ENCODE measurements at regions of chr11 and their contacts with region 1.

Region 1: DNA sequence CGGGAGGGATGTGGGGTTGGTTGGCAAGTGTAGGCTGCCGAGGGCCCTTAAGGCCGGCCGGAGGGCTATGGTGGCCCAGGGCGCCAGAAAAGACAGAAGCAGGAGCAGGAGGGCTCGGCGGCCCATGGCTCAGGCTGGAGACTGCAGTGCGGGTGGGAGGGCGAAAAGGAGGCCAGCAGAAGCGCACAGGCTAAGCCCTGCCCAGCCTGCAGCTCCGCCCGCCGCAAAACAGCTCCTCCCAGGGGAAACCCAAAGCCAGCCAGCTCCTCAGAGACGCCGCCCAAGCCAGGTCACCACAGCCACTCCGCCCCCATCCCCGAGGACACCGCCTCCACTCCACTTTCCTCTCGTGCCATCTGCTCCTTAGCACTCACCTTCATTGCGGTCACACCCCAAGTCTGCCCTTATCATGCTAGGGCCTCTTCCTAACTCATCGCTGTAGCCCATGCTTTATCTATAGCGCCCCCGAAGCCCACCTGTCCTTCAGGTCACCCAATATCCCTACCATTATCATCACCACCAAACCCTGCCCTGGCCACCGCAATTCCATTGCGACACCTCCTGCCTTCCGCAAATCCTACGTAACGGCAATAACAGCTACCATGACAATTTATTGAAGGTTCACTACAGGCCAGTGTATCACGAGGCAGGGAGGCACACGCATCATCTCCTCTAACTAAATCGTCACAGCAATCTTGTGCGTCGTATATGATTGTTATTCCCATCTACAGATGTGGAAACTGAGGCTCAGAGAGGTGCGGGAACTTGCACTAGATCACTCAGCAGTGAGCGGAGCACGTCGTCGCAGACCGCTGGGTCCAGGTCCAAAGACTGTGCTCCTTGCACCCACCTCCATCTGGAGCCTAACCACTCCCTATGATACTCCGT is at the start of gene PRCP:
- DNase-seq: peak; percentile 92 to 95
- H3K4me3 ChIP-seq: peak within 1 kb of the TSS; percentile 88
- H3K27ac ChIP-seq: peak within 1 kb of the TSS; percentile 31; the same call in 1 of the 2 replicates
- H3K4me1 ChIP-seq: peaks cover 17% of the 10 kb centered on the region
- H3K27me3 ChIP-seq: no peaks in the 10 kb centered on the region
- CTCF ChIP-seq: no peak
- total RNA-seq, gene PRCP: 42.7 and 46.2 TPM in 2 replicates

Region 2: DNA sequence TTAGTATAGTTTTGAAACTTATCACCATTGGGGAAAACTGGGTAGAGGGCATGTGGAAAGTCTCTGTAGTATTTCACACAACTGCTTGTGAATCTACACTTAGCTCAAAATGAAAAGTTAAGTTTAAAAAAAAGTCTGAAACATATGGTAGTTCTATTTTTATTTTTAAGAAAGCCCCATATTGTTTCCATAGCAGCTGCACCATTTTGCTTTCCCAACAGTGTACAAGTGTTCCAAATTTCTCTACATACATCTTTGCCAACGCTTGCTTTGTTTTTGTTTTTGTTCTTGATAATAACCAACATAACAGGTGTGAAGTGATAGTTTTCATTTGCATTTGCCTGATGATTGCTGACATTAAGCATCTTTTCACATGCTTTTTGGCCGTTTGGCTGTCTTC is 612.0 kb before region 1 on chr11:
- CTCF ChIA-PET with region 1: no interaction called
- POLR2A ChIA-PET with region 1: no interaction called
- intact Hi-C with region 1: no loop called
- DNase-seq: no peak
- H3K4me3 ChIP-seq: no peak overlapping the region
- H3K27ac ChIP-seq: no peak overlapping the region
- H3K4me1 ChIP-seq: no peaks in the 10 kb centered on the region
- H3K27me3 ChIP-seq: no peaks in the 10 kb centered on the region
- CTCF ChIP-seq: no peak

Region 3: GRCh38 chr11:82718307-82718706 is 182.2 kb before region 1 on chr11:
- CTCF ChIA-PET with region 1: no interaction called
- POLR2A ChIA-PET with region 1: no interaction called
- intact Hi-C with region 1: loop called (anchors 2 kb)
- DNase-seq: peak; percentile 32 to 53
- H3K4me3 ChIP-seq: no peak overlapping the region
- H3K27ac ChIP-seq: no peak overlapping the region
- H3K4me1 ChIP-seq: no peaks in the 10 kb centered on the region
- H3K27me3 ChIP-seq: peaks cover 7% of the 10 kb centered on the region; the same call in 1 of the 2 replicates
- CTCF ChIP-seq: peak; percentile 92

Region 4: DNA sequence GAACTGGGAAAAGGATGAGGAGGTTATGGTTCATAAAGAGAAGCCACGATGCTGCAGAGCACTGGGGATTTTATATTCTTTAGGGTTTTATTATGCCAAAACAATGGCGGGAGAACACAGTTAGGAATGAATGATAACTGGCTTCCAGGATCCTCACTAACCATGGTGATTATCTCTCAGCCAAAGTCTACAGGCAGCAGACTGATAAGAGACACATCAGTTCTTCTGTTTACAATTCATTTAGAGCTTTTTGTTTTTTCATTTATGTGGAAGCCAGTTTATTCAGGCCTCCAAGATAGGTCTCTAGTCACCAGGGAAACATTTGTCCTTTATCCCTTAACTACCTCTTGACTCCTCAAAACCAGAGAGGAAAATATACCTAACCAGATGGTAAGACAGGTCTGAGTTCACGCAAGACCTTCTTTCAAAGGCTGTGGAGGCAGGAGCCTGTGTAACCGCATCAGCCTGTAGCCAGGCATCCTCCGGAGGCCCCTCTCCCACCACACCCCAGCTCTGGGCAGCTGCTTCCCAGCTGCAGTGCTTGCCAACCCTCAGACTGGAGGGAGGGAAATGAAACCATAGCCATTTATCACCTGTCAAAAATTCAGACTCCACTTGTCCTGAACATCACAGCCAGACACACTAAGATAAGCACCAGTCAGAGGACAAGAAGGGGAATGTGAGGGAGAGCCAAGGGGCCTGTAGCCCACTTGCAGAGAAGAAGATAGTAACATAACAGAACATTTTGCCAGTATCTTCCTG is 109.6 kb before region 1 on chr11:
- CTCF ChIA-PET with region 1: no interaction called
- POLR2A ChIA-PET with region 1: no interaction called
- intact Hi-C with region 1: no loop called
- DNase-seq: no peak
- H3K4me3 ChIP-seq: no peak overlapping the region
- H3K27ac ChIP-seq: no peak overlapping the region
- H3K4me1 ChIP-seq: no peaks in the 10 kb centered on the region
- H3K27me3 ChIP-seq: no peaks in the 10 kb centered on the region
- CTCF ChIP-seq: no peak

Region 5: GRCh38 chr11:82867495-82868082 is 32.9 kb before region 1 on chr11:
- CTCF ChIA-PET with region 1: interaction called, 8 read pairs
- POLR2A ChIA-PET with region 1: interaction called, 22 read pairs
- intact Hi-C with region 1: loop called (anchors 2 kb)
- DNase-seq: peak; percentile 48 to 69
- H3K4me3 ChIP-seq: no peak overlapping the region
- H3K27ac ChIP-seq: no peak overlapping the region
- H3K4me1 ChIP-seq: no peaks in the 10 kb centered on the region
- H3K27me3 ChIP-seq: no peaks in the 10 kb centered on the region
- CTCF ChIP-seq: peak; percentile 94

Region 6: GRCh38 chr11:83054001-83054400 is 153.5 kb after region 1 on chr11:
- CTCF ChIA-PET with region 1: no interaction called
- POLR2A ChIA-PET with region 1: no interaction called
- intact Hi-C with region 1: no loop called
- DNase-seq: no peak
- H3K4me3 ChIP-seq: no peak overlapping the region
- H3K27ac ChIP-seq: no peak overlapping the region
- H3K4me1 ChIP-seq: peaks cover 55% of the 10 kb centered on the region
- H3K27me3 ChIP-seq: no peaks in the 10 kb centered on the region
- CTCF ChIP-seq: no peak

Region 7: DNA sequence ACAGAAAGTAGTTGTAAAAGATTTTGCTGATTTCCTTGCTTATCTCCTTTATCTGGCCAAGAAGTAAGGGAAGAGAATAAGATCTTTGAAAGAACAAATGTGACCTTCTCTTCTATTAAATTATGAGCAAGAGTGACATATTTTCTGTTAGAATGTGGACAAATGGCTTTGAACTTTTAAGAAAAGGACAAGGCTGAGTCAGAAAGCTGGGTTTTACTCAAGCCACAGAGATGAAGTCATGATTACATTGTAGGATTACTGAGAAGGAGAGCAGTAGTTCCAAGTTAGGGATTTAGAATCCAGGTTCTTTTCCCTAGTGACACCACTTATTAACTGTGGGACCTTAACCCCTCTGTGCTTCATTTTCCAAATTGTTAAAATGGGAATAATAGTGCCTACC is 372.1 kb after region 1 on chr11:
- CTCF ChIA-PET with region 1: no interaction called
- POLR2A ChIA-PET with region 1: no interaction called
- intact Hi-C with region 1: no loop called
- DNase-seq: peak in 1 of 2 experiments; percentile 58
- H3K4me3 ChIP-seq: no peak overlapping the region
- H3K27ac ChIP-seq: no peak overlapping the region
- H3K4me1 ChIP-seq: no peaks in the 10 kb centered on the region
- H3K27me3 ChIP-seq: no peaks in the 10 kb centered on the region
- CTCF ChIP-seq: no peak

Region 8: DNA sequence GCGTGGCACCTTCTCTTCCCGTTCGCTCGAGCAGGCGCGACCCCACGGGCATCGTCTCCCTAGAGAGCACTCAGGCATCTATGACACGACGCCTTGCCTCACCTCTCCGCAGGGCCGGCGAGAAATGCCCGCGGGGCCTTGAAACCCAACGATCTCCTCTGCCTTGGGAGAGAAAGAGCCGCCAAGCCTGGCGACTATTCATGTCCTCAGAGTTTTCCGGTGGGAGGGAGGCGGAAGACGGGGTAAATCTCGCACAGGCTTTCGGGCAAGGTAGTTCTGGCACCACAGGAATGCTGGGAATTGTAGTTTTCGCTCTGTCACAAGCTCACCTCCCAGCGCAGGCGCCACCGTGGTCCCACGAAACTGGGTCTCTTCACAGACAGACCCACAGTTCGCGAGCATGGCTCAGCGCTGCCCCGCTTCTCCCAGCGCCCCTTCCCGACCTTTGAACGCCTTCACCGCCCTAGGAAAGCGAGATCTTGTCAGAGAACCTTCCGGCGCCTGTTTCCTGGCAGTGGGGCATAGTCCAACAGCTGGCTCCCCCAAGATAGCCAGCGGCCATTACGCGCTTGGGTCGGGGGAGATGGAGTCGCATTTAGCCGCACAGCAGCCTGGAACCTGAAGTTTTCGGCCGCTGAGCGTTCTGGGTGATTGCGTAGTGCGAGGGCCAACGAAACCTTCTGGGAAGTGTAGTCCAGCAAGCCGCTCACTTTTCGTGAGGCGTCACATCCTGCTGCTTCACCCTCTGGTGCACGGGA is 385.4 kb after region 1 on chr11 and contains the start of gene CCDC90B:
- CTCF ChIA-PET with region 1: interaction called, 6 read pairs
- POLR2A ChIA-PET with region 1: interaction called, 8 read pairs
- intact Hi-C with region 1: loop called (anchors 1 kb)
- DNase-seq: peak; percentile 91 to 97
- H3K4me3 ChIP-seq: peak within 1 kb of the TSS; percentile 75
- H3K27ac ChIP-seq: peak within 1 kb of the TSS; percentile 82
- H3K4me1 ChIP-seq: peaks cover 16% of the 10 kb centered on the region
- H3K27me3 ChIP-seq: no peaks in the 10 kb centered on the region
- CTCF ChIP-seq: no peak
- total RNA-seq, gene CCDC90B: 32.2 and 36.6 TPM in 2 replicates

Region 9: GRCh38 chr11:83724008-83724461 is 823.5 kb after region 1 on chr11:
- CTCF ChIA-PET with region 1: no interaction called
- POLR2A ChIA-PET with region 1: no interaction called
- intact Hi-C with region 1: loop called (anchors 2 kb)
- DNase-seq: peak; percentile 10 to 45
- H3K4me3 ChIP-seq: peak overlapping the region; percentile 29; the same call in 1 of the 2 replicates
- H3K27ac ChIP-seq: no peak overlapping the region
- H3K4me1 ChIP-seq: no peaks in the 10 kb centered on the region
- H3K27me3 ChIP-seq: peaks cover 4% of the 10 kb centered on the region; the same call in 1 of the 2 replicates
- CTCF ChIP-seq: peak; percentile 41; the same call in 1 of the 2 replicates

Measured in PC-9 (cell line).